ENCODE measurements at regions of chr6 and their contacts with region 1.

Region 1: GRCh38 chr6:56062836-56063235 is 184.5 kb downstream of the COL21A1 start:
- DNase-seq: peak; percentile 0
- ATAC-seq: no peak
- H3K4me3 ChIP-seq: no peak overlapping the region
- H3K27ac ChIP-seq: no peak overlapping the region
- H3K4me1 ChIP-seq: no peaks in the 10 kb centered on the region
- H3K27me3 ChIP-seq: 0 out of 2 replicates have a peak, but pooled peaks cover 3% of the 10 kb centered on the region
- CTCF ChIP-seq: no peak
- POLR2A ChIP-seq: no peak
- RAD21 ChIP-seq: no peak

Region 2: GRCh38 chr6:56004426-56004825 is 58.4 kb before region 1 on chr6:
- CTCF ChIA-PET with region 1: no interaction called
- POLR2A ChIA-PET with region 1: no interaction called
- dilution Hi-C with region 1: no loop called
- in situ Hi-C with region 1: no loop called
- intact Hi-C with region 1: loop called (anchors 10 kb)
- DNase-seq: peak; percentile 5
- ATAC-seq: no peak
- H3K4me3 ChIP-seq: no peak overlapping the region
- H3K27ac ChIP-seq: no peak overlapping the region
- H3K4me1 ChIP-seq: no peaks in the 10 kb centered on the region
- H3K27me3 ChIP-seq: no peaks in the 10 kb centered on the region
- CTCF ChIP-seq: no peak
- POLR2A ChIP-seq: no peak
- RAD21 ChIP-seq: no peak

Region 3: DNA sequence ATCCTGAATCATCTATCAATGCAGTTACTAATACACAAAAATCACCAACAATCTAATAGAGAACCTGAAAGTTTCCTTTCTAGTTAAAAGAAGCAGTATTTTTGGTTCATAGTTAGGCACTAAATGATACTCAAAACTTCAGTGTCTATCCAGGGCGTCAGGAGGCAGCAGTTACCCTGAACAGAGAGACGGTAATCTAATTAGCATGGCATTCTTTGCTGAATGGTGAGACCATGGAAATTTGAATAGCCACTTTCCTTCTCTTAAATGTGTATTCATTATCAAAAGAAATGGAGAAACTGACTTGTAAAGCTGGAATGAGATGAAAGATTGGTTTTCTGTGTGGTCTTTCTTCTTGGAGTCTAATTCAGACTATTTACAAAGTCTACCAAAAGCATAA is 40.9 kb before region 1 on chr6:
- CTCF ChIA-PET with region 1: no interaction called
- POLR2A ChIA-PET with region 1: no interaction called
- dilution Hi-C with region 1: no loop called
- in situ Hi-C with region 1: no loop called
- intact Hi-C with region 1: no loop called
- DNase-seq: no peak
- ATAC-seq: no peak
- H3K4me3 ChIP-seq: no peak overlapping the region
- H3K27ac ChIP-seq: no peak overlapping the region
- H3K4me1 ChIP-seq: no peaks in the 10 kb centered on the region
- H3K27me3 ChIP-seq: no peaks in the 10 kb centered on the region; the same call in 1 of the 2 replicates
- CTCF ChIP-seq: 0 out of 2 replicates have a peak, but pooled peaks have one; percentile 14
- POLR2A ChIP-seq: no peak
- RAD21 ChIP-seq: no peak

Region 4: GRCh38 chr6:56451165-56451739 is 388.4 kb after region 1 on chr6:
- CTCF ChIA-PET with region 1: no interaction called
- POLR2A ChIA-PET with region 1: no interaction called
- dilution Hi-C with region 1: no loop called
- in situ Hi-C with region 1: no loop called
- intact Hi-C with region 1: no loop called
- DNase-seq: peak; percentile 69
- ATAC-seq: peak; percentile 34
- H3K4me3 ChIP-seq: no peak overlapping the region
- H3K27ac ChIP-seq: peak overlapping the region; percentile 27; the same call in 1 of the 2 replicates
- H3K4me1 ChIP-seq: peaks cover 5% of the 10 kb centered on the region
- H3K27me3 ChIP-seq: no peaks in the 10 kb centered on the region
- CTCF ChIP-seq: no peak
- POLR2A ChIP-seq: no peak
- RAD21 ChIP-seq: no peak

Measured in IMR-90 (cell line).